ENCODE measurements at regions of chr10 and their contacts with region 1.

Region 1: DNA sequence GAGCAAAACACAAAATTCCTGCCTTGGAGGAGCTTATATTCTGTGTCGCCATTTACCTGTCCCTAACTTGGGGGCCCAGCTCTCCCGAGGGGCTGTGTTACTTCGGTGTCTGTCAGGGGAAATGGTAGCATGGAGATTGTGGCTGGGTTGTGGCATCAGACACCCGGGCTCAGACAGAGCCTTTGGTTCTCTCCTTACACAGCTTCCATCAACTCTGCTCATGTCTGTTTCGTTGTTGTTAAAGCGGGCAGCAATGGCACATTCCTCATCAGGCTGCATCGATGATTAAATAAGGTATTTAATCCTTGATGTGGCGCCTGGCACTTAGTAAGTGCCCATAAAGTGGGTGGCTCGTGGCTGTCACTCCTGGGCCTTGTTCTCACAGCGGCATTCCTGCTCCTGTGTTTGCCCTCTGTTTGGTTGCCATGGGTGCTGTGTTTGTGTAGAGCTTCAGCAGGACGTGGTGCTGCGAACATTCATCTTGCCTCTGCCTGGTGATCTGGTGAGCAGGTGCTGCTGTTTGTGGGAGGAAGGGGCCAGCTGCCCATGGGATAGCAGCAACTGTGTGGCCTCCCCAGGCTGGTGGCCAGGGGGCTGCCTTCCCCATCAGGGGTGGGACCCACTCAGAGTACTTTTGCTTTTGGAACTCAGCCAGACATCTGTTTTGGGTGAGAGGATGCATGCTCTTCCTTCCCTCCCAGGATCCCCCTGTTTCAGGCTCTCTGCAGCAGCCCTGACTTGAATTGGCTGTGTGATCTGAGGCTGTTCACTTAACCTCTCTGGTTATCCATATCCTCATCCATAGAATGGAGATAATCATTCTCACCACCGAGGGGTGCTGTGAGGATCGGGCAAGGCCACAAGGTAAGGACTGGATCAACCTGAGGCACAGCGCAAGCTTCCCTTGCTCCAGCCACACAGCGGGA is 207.2 kb upstream of the SVIL start:
- DNase-seq: peak in 4 of 5 donors; percentile 75 to 89 (median 82)
- ATAC-seq: peak; percentile 85 to 94 (median 90)
- H3K4me3 ChIP-seq: peak overlapping the region in 2 of 12 donors; percentile 33 to 46
- H3K27ac ChIP-seq: peak overlapping the region in 11 of 12 donors; percentile 48 to 93 (median 79)
- H3K4me1 ChIP-seq: peaks cover 0 to 42% (median 5%) of the 10 kb centered on the region in 12 donors
- H3K27me3 ChIP-seq: no peaks in the 10 kb centered on the region
- CTCF ChIP-seq: no peak
- POLR2A ChIP-seq: peak in 1 of 2 donors; percentile 70

Region 2: DNA sequence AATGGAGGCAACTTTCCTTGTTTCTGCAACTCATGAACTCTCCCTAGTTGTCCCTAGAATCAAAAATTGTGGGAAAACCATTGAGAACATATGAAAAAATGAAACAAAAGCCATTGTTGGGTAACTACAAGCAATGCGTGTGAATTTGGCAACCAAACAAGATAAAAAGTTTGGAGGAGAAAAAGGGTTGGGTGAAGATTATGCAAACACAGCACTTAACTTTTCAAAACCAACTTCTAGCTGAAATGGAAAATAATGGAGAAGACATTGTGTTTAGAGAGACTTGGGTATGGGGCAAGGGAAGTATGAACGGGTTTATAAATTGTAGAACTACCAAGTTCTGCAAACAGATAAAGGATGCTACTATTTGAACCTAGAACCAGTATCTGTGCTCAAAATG is 118.3 kb before region 1 on chr10:
- intact Hi-C with region 1: no loop called
- DNase-seq: no peak
- ATAC-seq: no peak
- H3K4me3 ChIP-seq: no peak overlapping the region
- H3K27ac ChIP-seq: peak overlapping the region in 4 of 12 donors; percentile 6 to 98 (median 53)
- H3K4me1 ChIP-seq: peaks cover 0 to 47% (median 29%) of the 10 kb centered on the region in 12 donors
- H3K27me3 ChIP-seq: no peaks in the 10 kb centered on the region
- CTCF ChIP-seq: no peak
- POLR2A ChIP-seq: no peak

Region 3: DNA sequence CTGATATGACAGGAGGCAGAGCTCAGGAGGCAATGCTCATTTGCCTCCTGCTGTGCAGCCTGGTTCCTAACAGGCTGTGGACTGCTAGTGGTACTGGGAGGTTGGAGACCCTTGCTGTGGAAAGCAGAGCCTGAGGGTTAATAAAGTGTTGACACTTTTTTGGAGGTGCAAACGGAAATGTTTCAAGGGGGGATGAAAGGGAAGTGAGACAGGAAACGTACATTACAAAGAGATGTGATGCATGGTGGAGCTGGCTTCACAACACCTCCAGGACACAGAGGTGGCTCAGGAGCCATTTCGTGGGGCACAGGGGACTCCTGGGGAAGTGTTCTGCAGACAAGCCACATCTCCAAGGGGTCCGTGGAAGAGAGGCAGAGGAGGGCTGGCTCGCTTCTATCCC is 69.6 kb before region 1 on chr10:
- intact Hi-C with region 1: loop called in 1 of 10 experiments (anchors 2 kb)
- DNase-seq: no peak
- ATAC-seq: no peak
- H3K4me3 ChIP-seq: no peak overlapping the region
- H3K27ac ChIP-seq: peak overlapping the region in 1 of 12 donors; percentile 61
- H3K4me1 ChIP-seq: no peaks in the 10 kb centered on the region
- H3K27me3 ChIP-seq: no peaks in the 10 kb centered on the region
- CTCF ChIP-seq: no peak
- POLR2A ChIP-seq: no peak

Region 4: DNA sequence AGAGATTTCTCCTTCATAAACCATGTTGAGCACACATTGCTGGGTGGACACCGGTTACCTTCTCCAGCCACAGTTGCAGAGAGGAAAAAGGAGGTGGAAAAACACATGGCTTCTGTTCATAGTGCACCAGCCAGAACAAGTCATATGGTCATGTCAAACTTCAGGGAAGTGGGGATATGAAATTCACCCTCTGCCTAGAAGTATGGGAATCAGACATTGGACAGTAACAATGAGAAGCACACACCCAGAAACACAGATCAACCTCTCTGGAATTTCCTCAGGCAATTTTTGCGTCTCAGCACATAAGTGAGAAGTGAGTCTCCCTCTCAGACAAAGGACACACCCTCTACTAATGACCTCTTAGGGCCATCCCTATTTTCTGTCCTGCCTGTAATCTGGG is 34.6 kb before region 1 on chr10:
- intact Hi-C with region 1: loop called in 1 of 10 experiments (anchors 5 kb)
- DNase-seq: no peak
- ATAC-seq: no peak
- H3K4me3 ChIP-seq: no peak overlapping the region
- H3K27ac ChIP-seq: peak overlapping the region in 1 of 12 donors; percentile 90
- H3K4me1 ChIP-seq: peaks cover 0 to 40% (median 20%) of the 10 kb centered on the region in 12 donors
- H3K27me3 ChIP-seq: no peaks in the 10 kb centered on the region
- CTCF ChIP-seq: no peak
- POLR2A ChIP-seq: no peak

Region 5: GRCh38 chr10:29998142-29998808 is 156.3 kb after region 1 on chr10:
- intact Hi-C with region 1: no loop called
- DNase-seq: peak; percentile 68 to 79 (median 70)
- ATAC-seq: peak in 3 of 4 donors; percentile 56 to 73 (median 72)
- H3K4me3 ChIP-seq: no peak overlapping the region
- H3K27ac ChIP-seq: no peak overlapping the region
- H3K4me1 ChIP-seq: peaks cover 8 to 31% (median 27%) of the 10 kb centered on the region in 12 donors
- H3K27me3 ChIP-seq: peaks cover 0 to 4% (median 0%) of the 10 kb centered on the region in 9 donors
- CTCF ChIP-seq: peak; percentile 97 to 100 (median 98)
- POLR2A ChIP-seq: no peak